Vagina (tissue), 2 donors: ENCODE measurements at regions of chr1 and their contacts with region 1.

Region 1: DNA sequence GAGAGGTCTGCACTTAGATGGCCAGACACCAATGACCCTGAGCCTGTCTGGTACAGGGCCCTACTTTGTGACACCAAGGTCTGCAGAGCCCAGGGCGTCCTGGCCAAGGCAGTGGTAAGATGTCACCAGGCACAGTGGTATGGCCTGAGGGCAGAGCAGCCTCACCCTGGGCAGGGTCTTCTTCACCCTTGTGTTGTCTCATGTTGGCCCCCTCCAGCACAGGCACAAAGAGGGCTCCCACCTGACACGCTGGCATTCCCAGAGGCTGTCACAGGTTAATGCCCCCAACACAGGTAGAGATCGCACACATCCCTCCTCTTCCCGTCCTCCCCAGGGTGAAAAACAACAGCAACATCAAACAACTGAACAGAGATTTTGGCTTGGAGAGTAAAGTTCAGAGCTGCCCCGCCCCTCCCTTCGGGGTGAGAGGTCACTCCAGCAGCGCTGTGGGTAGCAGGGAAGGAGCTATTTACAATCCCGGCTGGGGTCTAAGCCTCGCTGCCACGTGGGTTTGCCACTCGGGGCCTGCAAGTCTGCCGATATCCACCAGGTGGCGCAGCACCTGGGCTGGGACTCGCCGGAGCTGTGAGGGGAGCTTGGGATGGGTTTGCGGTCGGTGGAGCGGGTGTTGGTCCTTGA is 12.6 kb downstream of the EFNA3 start:
- DNase-seq: no peak
- H3K4me3 ChIP-seq: no peak overlapping the region
- H3K27ac ChIP-seq: no peak overlapping the region
- H3K4me1 ChIP-seq: peaks cover 29% of the 10 kb centered on the region
- H3K27me3 ChIP-seq: no peaks in the 10 kb centered on the region
- CTCF ChIP-seq: peak; percentile 90 to 96 (median 96)
- POLR2A ChIP-seq: no peak

Region 2: GRCh38 chr1:155134858-155135414 is 43.7 kb after region 1 on chr1:
- intact Hi-C with region 1: loop called (anchors 5 kb)
- DNase-seq: peak in 1 of 2 donors; percentile 97
- H3K4me3 ChIP-seq: peak overlapping the region; percentile 57 to 90
- H3K27ac ChIP-seq: peak overlapping the region; percentile 97
- H3K4me1 ChIP-seq: peaks cover 82% of the 10 kb centered on the region
- H3K27me3 ChIP-seq: no peaks in the 10 kb centered on the region
- CTCF ChIP-seq: no peak
- POLR2A ChIP-seq: no peak

Region 3: GRCh38 chr1:155167166-155168104 is 76.2 kb after region 1 on chr1:
- intact Hi-C with region 1: loop called (anchors 2 kb)
- DNase-seq: peak; percentile 87 to 96
- H3K4me3 ChIP-seq: peak overlapping the region in 1 of 2 donors; percentile 23
- H3K27ac ChIP-seq: peak overlapping the region; percentile 47
- H3K4me1 ChIP-seq: peaks cover 33% of the 10 kb centered on the region
- H3K27me3 ChIP-seq: no peaks in the 10 kb centered on the region
- CTCF ChIP-seq: peak; percentile 81 to 93 (median 88)
- POLR2A ChIP-seq: no peak

Region 4: DNA sequence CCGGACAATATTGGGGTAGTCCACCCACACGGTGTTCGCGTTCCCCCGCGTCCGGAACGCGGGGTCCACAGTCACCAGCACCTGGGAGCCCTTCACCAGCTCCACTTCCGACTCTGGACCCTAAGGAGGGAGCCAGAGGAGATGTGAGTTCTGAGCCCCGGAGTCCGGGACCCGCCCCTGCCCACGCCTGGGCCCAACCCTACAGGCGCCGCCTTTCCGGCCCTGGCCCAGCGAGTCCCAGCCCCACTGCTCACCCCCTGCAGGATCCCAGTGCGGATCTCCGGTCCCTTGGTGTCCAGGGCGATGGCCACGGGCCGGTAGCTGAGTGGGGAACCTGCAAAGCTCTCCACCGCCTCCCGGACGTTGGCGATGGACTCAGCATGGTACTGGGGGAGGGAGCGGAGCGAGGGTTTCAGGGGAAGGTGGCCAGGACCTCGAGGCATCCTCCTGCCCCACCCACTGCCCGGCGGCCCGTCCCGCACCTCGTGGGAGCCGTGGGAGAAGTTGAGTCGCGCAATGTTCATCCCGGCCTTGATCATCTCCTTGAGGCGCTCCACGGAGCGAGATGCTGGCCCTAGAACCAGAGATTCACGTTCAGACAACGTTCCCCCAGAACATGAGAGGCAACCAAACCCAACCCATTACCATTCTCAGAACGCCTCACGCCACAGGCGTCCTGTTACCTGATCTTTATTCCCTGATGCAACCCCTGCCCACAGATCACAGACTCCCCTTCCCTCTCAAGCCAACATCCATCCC is 204.2 kb after region 1 on chr1:
- intact Hi-C with region 1: no loop called
- DNase-seq: no peak
- H3K4me3 ChIP-seq: peak overlapping the region in 1 of 2 donors; percentile 25
- H3K27ac ChIP-seq: no peak overlapping the region
- H3K4me1 ChIP-seq: peaks cover 15% of the 10 kb centered on the region
- H3K27me3 ChIP-seq: no peaks in the 10 kb centered on the region
- CTCF ChIP-seq: no peak
- POLR2A ChIP-seq: no peak